ENCODE measurements at regions of chr5 and their contacts with region 1.

Region 1: GRCh38 chr5:154072414-154073171 is 33.8 kb downstream of the MFAP3 start:
- DNase-seq: peak; percentile 66 to 85 (median 75)
- H3K4me3 ChIP-seq: no peak overlapping the region
- H3K4me3 Mint-ChIP-seq: peak overlapping the region in 3 of 7 donors; percentile 0 to 55 (median 51)
- H3K27ac ChIP-seq: no peak overlapping the region
- H3K27ac Mint-ChIP-seq: peak overlapping the region in 7 of 8 donors; percentile 2 to 89 (median 77)
- H3K4me1 ChIP-seq: peaks cover 16% of the 10 kb centered on the region
- H3K4me1 Mint-ChIP-seq: peaks cover 12 to 29% (median 21%) of the 10 kb centered on the region in 3 donors
- H3K27me3 ChIP-seq: no peaks in the 10 kb centered on the region
- H3K27me3 Mint-ChIP-seq: peaks cover 0 to 3% of the 10 kb centered on the region in 2 donors

Region 2: GRCh38 chr5:153718713-153719112 is 353.9 kb before region 1 on chr5:
- CTCF ChIA-PET with region 1: no interaction called
- POLR2A ChIA-PET with region 1: no interaction called
- DNase-seq: no peak
- H3K4me3 ChIP-seq: no peak overlapping the region
- H3K4me3 Mint-ChIP-seq: no peak overlapping the region
- H3K27ac ChIP-seq: no peak overlapping the region
- H3K27ac Mint-ChIP-seq: no peak overlapping the region
- H3K4me1 ChIP-seq: no peaks in the 10 kb centered on the region
- H3K4me1 Mint-ChIP-seq: no peaks in the 10 kb centered on the region
- H3K27me3 ChIP-seq: no peaks in the 10 kb centered on the region
- H3K27me3 Mint-ChIP-seq: no peaks in the 10 kb centered on the region

Region 3: GRCh38 chr5:154138701-154139100 is 66.1 kb after region 1 on chr5:
- CTCF ChIA-PET with region 1: no interaction called
- POLR2A ChIA-PET with region 1: no interaction called
- DNase-seq: no peak
- H3K4me3 ChIP-seq: no peak overlapping the region
- H3K4me3 Mint-ChIP-seq: no peak overlapping the region
- H3K27ac ChIP-seq: no peak overlapping the region
- H3K27ac Mint-ChIP-seq: no peak overlapping the region
- H3K4me1 ChIP-seq: no peaks in the 10 kb centered on the region
- H3K4me1 Mint-ChIP-seq: no peaks in the 10 kb centered on the region
- H3K27me3 ChIP-seq: no peaks in the 10 kb centered on the region
- H3K27me3 Mint-ChIP-seq: peaks cover 5 to 8% of the 10 kb centered on the region in 2 donors

Region 4: GRCh38 chr5:154179846-154180710 is 107.5 kb after region 1 on chr5:
- CTCF ChIA-PET with region 1: interaction called, 14 read pairs
- POLR2A ChIA-PET with region 1: no interaction called
- DNase-seq: peak in 4 of 5 donors; percentile 7 to 57 (median 38)
- H3K4me3 ChIP-seq: no peak overlapping the region
- H3K4me3 Mint-ChIP-seq: peak overlapping the region in 2 of 7 donors; percentile 25 to 31
- H3K27ac ChIP-seq: no peak overlapping the region
- H3K27ac Mint-ChIP-seq: peak overlapping the region in 1 of 8 donors; percentile 54
- H3K4me1 ChIP-seq: peaks cover 3% of the 10 kb centered on the region
- H3K4me1 Mint-ChIP-seq: peaks cover 0 to 5% (median 0%) of the 10 kb centered on the region in 3 donors
- H3K27me3 ChIP-seq: no peaks in the 10 kb centered on the region
- H3K27me3 Mint-ChIP-seq: peaks cover 0 to 16% of the 10 kb centered on the region in 2 donors

Region 5: GRCh38 chr5:154196955-154197652 is 124.5 kb after region 1 on chr5:
- CTCF ChIA-PET with region 1: interaction called, 23 read pairs
- POLR2A ChIA-PET with region 1: no interaction called
- DNase-seq: peak in 1 of 5 donors; percentile 30
- H3K4me3 ChIP-seq: no peak overlapping the region
- H3K4me3 Mint-ChIP-seq: peak overlapping the region; percentile 3 to 71 (median 18)
- H3K27ac ChIP-seq: peak overlapping the region; percentile 26
- H3K27ac Mint-ChIP-seq: peak overlapping the region; percentile 22 to 97 (median 95)
- H3K4me1 ChIP-seq: peaks cover 53% of the 10 kb centered on the region
- H3K4me1 Mint-ChIP-seq: peaks cover 62 to 96% (median 92%) of the 10 kb centered on the region in 3 donors
- H3K27me3 ChIP-seq: no peaks in the 10 kb centered on the region
- H3K27me3 Mint-ChIP-seq: no peaks in the 10 kb centered on the region

Region 6: DNA sequence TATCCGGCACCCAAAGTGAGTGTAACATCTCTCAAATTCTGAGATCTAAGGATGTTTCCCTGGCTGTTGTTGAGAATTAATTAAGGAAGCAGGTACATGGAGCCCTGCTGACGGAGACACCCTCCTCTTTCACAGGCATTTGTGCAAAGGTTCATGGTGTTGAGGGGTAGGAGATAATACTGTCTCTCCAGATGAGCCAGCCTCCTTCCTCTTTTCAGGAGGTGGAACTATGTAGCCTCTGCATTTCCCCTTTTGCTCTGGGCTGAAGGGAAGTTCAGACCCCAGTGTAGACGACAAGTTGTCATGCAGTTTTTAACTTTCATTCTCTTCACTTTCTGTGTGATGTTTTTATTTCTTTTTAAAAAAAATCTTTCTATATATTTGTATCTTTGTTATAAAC is 225.5 kb after region 1 on chr5:
- CTCF ChIA-PET with region 1: no interaction called
- POLR2A ChIA-PET with region 1: no interaction called
- DNase-seq: no peak
- H3K4me3 ChIP-seq: no peak overlapping the region
- H3K4me3 Mint-ChIP-seq: no peak overlapping the region
- H3K27ac ChIP-seq: no peak overlapping the region
- H3K27ac Mint-ChIP-seq: no peak overlapping the region
- H3K4me1 ChIP-seq: no peaks in the 10 kb centered on the region
- H3K4me1 Mint-ChIP-seq: peaks cover 0 to 6% (median 0%) of the 10 kb centered on the region in 3 donors
- H3K27me3 ChIP-seq: no peaks in the 10 kb centered on the region
- H3K27me3 Mint-ChIP-seq: no peaks in the 10 kb centered on the region

Region 7: GRCh38 chr5:154384480-154385235 is 312.1 kb after region 1 on chr5:
- CTCF ChIA-PET with region 1: interaction called, 10 read pairs
- POLR2A ChIA-PET with region 1: no interaction called
- DNase-seq: peak in 4 of 5 donors; percentile 24 to 66 (median 42)
- H3K4me3 ChIP-seq: no peak overlapping the region
- H3K4me3 Mint-ChIP-seq: peak overlapping the region; percentile 12 to 83 (median 78)
- H3K27ac ChIP-seq: peak overlapping the region; percentile 13
- H3K27ac Mint-ChIP-seq: peak overlapping the region; percentile 90 to 99 (median 97)
- H3K4me1 ChIP-seq: peaks cover 18% of the 10 kb centered on the region
- H3K4me1 Mint-ChIP-seq: peaks cover 31 to 34% (median 31%) of the 10 kb centered on the region in 3 donors
- H3K27me3 ChIP-seq: no peaks in the 10 kb centered on the region
- H3K27me3 Mint-ChIP-seq: no peaks in the 10 kb centered on the region